ENCODE measurements at regions of chr1 and their contacts with region 1.

Region 1: DNA sequence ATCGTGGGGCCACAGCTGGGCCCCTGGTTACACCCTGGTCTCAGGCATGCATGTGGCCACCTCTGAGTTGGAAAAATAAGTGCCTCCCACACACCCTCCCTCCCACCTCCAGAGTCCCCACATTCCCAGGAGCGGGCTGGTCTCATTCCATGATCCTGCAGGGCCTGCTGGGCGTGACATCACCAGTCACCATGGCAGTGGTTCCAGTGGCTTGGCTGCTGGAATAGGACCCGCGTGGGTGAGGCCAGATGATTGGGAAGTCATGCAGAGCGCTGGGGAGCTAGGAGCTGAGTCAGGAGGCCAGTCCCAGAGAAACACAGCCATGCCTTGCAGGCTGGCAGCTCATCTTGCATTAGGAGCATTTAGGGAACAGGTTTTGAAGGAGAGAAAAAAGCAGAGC is 125.4 kb upstream of the TMEM51 start:
- DNase-seq: peak; percentile 71
- ATAC-seq: peak; percentile 64 to 77

Region 2: GRCh38 chr1:14742181-14742980 is 285.7 kb before region 1 on chr1:
- intact Hi-C with region 1: no loop called
- DNase-seq: no peak
- ATAC-seq: peak in 1 of 2 donors; percentile 88

Region 3: DNA sequence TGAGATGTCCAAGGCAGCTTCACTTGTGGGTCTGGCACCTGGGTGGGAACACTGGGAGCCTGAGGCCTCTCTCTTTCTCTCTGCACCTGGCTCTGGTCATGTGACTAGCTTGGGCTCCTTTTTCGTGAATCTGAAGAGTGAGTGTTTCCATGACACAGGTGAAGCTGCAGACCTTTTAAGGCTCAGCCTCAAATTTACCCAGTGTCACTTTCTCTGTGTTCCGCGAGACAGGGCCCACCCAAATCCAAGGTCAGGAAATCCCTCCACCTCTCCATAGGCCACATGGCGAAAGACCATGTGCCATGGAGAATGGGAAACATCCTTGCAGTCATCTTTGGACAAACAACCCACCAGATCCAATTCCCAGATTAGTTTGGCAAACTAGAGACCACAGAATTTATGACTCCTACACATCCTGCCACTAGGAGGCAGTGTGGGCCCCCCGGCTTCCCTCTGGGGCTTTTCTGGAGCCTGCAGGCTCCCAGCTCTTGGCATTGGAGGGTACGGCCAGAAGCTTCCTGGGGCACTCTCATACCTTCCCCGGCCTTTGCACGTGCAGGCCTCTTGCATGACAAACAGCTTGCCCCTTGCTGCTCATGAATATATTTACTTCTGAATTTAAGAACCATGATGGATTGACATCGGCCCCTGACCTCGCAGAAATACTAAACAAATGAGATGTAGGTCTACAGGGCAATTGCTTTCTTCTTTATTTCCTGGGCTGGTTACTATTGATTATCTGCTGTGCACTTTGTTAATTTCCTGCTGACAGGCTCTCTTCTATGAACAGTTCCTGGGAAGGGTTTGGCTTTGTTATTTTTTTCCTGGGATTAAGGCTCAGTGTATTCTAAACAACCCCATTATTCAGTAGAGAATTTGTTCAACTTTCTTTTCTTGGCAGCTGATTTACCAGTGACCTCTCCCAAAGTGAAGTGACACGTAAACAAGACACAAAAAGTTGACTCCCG is 248.9 kb before region 1 on chr1:
- intact Hi-C with region 1: loop called in 1 of 2 experiments (anchors 5 kb)
- DNase-seq: peak; percentile 33
- ATAC-seq: no peak

Region 4: GRCh38 chr1:14923727-14924452 is 104.2 kb before region 1 on chr1:
- intact Hi-C with region 1: loop called (anchors 2 to 5 kb)
- DNase-seq: peak; percentile 85
- ATAC-seq: peak; percentile 77 to 78

Region 5: DNA sequence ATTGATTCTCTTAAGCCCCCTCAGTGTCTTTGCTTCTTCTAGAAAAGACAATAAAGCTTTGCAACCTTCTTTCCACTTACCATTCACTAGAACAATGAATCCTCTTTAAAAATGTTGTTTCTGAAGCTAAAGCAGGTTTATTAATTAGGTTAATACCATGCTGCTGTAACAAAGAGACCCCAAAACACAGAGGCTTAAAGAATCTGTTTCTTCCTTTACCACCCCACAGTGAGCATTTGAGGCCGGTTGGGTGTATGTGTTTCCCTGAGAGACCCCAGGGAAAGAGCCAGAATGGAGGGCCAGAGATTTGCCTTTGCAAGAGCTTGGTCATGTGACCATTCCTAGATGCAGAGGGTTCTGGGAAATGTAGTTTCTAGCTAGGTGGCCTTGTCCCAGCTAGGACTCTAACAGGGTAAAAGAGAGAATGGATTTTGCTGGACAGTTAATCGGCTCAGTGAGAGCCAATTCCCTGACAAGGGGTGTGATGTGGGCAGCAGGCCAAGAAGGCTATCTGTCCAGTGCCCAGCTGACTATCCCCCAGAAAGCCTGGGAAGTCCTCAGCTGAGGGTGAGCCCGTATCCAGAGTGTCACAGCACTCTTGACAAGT is 66.3 kb before region 1 on chr1:
- intact Hi-C with region 1: no loop called
- DNase-seq: no peak
- ATAC-seq: peak; percentile 48 to 52

Region 6: DNA sequence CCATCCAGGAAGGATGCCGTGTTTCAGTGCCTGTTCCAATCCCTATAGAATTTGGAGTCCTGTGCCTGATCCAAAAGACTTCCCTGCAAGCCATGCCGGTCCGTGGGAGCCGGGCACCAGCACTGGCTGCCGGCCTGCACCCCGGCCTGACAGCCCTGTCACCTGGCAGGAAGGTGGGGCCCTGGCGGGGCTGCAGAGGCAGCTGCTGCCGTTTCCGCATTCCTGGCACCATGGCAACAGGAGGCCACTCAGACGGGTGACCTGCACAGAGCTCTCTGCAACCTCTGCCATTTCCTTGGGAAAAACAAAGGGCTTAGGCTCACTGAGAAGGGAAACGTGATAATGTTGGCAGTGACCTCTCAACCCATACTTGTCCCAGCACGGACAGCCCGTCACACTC is 62.3 kb after region 1 on chr1:
- intact Hi-C with region 1: no loop called
- DNase-seq: no peak
- ATAC-seq: peak; percentile 42 to 57

Measured in left cardiac atrium (tissue), 4 donors.